ENCODE measurements at regions of chr13 and their contacts with region 1.

Region 1: GRCh38 chr13:31896427-31896826 is 135.1 kb upstream of the FRY start:
- DNase-seq: peak in 1 of 2 donors; percentile 74
- H3K4me3 ChIP-seq: no peak overlapping the region
- H3K27ac ChIP-seq: peak overlapping the region; percentile 66 to 77
- H3K4me1 ChIP-seq: peaks cover 5 to 36% of the 10 kb centered on the region in 2 donors
- H3K27me3 ChIP-seq: no peaks in the 10 kb centered on the region
- CTCF ChIP-seq: no peak

Region 2: DNA sequence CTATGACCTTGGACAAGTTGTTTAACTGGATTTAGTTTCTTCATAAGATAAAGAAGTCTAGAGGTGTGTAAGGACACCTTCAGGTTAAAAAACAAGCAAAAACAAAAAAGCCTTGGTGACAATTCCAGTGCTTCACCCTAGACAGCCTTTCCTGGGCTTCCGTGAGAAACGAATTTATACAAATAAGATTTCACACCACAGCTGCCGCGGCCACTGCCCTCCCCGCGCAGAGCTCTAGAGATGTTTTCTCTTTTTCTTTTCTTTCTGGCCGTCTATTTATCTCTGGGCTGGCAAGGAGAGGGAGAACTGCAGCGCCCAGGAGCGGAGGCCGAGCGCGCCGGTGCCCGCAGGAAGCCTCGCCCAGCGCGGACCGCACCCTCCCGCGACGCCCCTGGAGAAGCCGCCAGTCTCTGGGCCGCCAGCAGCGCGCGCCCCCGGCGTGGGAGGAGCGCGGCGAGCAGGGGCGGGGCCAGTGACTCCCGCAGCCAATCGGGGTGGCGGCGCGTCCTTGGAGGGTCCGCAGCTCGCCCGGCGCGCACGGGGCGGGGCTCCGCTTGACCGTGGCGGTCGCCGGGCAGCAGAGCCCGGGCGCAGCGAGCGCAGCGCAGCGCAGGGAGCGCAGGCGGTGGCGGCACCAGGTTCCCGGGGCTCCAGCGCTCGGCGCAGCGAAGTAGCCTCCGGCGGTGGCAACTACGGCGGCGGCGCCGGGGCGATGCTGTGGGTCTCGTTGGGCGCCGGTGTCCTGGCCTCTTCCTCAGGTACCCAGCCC is 50.1 kb before region 1 on chr13:
- intact Hi-C with region 1: loop called (anchors 2 kb)
- DNase-seq: peak; percentile 60 to 94
- H3K4me3 ChIP-seq: peak overlapping the region; percentile 65 to 97
- H3K27ac ChIP-seq: peak overlapping the region; percentile 89 to 93
- H3K4me1 ChIP-seq: peaks cover 0 to 2% of the 10 kb centered on the region in 2 donors
- H3K27me3 ChIP-seq: no peaks in the 10 kb centered on the region
- CTCF ChIP-seq: no peak

Measured in ascending aorta (tissue), 2 donors.